SK-N-SH (cell line): ENCODE measurements at regions of chr14 and their contacts with region 1.

Region 1: DNA sequence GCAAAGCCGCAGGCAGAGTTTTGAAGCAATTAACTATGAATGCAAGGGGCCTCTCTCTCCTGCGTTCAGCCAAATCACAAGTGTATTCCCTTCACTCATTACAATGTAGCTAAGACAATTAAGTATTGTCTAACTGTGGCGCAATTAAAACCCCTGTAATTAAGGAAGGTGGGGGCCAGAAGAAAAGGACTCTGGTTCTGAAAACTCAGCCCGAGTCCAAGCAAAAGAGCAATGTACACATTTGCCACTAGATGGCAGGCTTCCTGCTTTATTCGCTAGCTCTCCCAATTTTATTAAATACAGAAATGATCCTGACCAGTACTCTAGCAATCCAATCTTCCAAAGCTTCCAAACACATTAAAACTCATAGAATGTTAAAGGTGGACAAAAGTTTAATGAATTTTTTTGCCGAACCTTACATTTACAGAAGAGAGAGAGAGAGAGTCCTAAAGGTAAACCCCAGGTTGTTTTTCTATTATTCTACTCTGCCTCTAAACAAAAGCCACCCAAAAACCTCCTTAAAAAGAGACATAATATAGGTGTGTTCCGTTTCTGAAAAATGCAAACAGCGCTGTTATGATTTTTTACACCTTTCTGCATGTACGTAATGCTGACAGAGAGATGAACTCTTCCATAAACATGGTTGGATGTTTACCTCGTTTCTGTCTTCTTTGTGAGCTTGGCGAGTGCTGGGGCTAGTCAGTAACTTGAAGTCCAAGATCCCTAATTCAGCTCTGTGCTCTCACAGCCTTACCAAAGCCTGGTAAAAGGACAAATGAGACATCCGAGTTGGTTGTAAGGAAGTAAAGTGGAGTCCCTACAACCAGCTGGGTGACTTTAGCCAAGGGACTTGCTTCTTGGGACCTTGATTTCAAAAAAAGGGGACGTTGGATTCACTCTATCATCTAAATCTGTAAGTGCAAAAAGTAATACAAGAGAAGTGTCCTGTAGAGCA is 50.9 kb upstream of the VASH1 start:
- DNase-seq: peak; percentile 68
- H3K4me3 ChIP-seq: no peak overlapping the region
- H3K27ac ChIP-seq: no peak overlapping the region
- H3K4me1 ChIP-seq: peaks cover 0 to 1% of the 10 kb centered on the region in 2 experiments; a peak in 1 of 4 replicates
- H3K27me3 ChIP-seq: no peaks in the 10 kb centered on the region; the same call in 1 of the 2 replicates
- CTCF ChIP-seq: peak; percentile 91
- EP300 ChIP-seq: no peak
- RAD21 ChIP-seq: peak; percentile 82

Region 2: DNA sequence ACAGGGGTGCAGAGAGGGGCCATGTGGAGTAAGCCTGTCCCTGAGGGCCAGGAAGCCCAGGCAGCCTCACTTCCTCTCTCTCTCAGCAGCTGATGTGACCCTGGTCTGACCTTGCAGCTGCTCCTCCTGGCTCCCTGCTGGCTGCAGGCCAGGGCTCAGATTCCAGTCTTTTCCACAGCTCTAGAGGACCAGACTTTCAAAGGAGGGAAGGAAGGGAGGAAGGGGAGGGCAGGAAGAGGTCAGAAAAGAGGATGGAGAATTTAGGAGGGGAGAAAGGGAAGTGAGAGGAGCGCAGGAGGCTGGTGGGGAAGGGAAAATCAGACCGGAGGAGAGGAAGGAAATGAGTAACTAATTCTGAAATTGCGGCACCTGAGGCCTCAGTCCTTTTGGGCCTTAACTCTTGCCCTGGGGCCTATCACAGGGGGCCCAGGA is 10.1 kb after region 1 on chr14:
- CTCF ChIA-PET with region 1: interaction called, 27 read pairs
- POLR2A ChIA-PET with region 1: no interaction called
- DNase-seq: peak; percentile 80
- H3K4me3 ChIP-seq: no peak overlapping the region
- H3K27ac ChIP-seq: peak overlapping the region in 1 of 2 experiments; percentile 83; a peak in 2 of 4 replicates
- H3K4me1 ChIP-seq: peaks cover 0 to 16% of the 10 kb centered on the region in 2 experiments; a peak in 2 of 4 replicates
- H3K27me3 ChIP-seq: peaks cover 9% of the 10 kb centered on the region; the same call in 1 of the 2 replicates
- CTCF ChIP-seq: no peak
- EP300 ChIP-seq: no peak
- RAD21 ChIP-seq: no peak

Region 3: DNA sequence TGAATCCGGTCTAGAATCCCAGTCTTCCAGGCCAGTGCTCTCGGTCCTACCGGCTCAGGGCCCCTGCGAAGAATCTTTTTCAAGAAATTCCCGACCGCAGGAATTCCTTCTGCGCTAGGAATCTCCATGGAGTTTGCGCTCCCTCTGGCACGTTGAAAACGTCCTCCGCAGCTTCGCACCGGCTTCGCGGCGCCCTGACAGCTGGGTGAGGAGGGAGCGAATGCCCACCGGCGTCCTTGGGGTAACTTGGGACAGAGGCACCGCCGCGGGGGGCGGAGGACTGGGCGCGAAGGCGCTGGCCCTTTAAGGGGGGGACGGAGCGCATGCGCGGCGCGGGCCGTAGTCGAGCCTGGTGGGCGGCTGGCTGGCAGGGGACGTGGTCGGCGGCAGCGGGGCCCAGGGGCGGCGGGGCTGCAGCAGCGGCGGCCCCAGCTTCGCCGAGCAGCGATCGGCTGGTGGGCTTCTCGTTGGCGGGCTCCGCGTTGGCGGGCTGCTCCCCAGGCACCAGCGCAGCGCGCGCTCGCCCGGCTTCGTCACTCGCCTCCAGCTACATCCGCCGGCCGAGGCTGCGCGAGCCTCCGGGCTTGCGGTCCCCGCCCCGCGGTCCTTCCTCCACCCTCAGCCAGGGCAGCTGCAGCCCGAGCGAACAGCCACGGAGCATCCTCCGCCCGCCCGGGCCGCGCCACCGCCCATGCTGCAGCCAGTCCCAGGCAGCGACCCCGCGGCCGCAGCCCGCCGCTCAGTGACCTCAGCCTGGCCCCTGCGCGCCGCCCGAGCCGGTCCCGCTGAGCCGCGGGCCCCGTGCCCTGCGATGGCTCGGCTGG is 51.0 kb after region 1 on chr14 and contains the start of gene VASH1:
- CTCF ChIA-PET with region 1: interaction called, 18 read pairs
- POLR2A ChIA-PET with region 1: no interaction called
- DNase-seq: peak; percentile 97
- H3K4me3 ChIP-seq: peak within 1 kb of the TSS; percentile 79 to 92
- H3K27ac ChIP-seq: peak within 1 kb of the TSS in 1 of 2 experiments; percentile 79; a peak in 2 of 4 replicates
- H3K4me1 ChIP-seq: peaks cover 0 to 25% of the 10 kb centered on the region in 2 experiments; a peak in 1 of 4 replicates
- H3K27me3 ChIP-seq: no peaks in the 10 kb centered on the region
- CTCF ChIP-seq: no peak
- EP300 ChIP-seq: no peak
- RAD21 ChIP-seq: no peak
- polyA plus RNA-seq, gene VASH1: 4.8 and 4.9 TPM in 2 replicates

Region 4: GRCh38 chr14:76773188-76773885 is 63.0 kb after region 1 on chr14:
- CTCF ChIA-PET with region 1: interaction called, 23 read pairs
- POLR2A ChIA-PET with region 1: no interaction called
- DNase-seq: peak; percentile 69
- H3K4me3 ChIP-seq: no peak overlapping the region
- H3K27ac ChIP-seq: peak overlapping the region; percentile 64 to 75
- H3K4me1 ChIP-seq: peaks cover 14 to 30% of the 10 kb centered on the region in 2 experiments
- H3K27me3 ChIP-seq: no peaks in the 10 kb centered on the region
- CTCF ChIP-seq: peak; percentile 16; the same call in 1 of the 2 replicates
- EP300 ChIP-seq: no peak; a peak in 1 of 4 replicates
- RAD21 ChIP-seq: no peak

Region 5: DNA sequence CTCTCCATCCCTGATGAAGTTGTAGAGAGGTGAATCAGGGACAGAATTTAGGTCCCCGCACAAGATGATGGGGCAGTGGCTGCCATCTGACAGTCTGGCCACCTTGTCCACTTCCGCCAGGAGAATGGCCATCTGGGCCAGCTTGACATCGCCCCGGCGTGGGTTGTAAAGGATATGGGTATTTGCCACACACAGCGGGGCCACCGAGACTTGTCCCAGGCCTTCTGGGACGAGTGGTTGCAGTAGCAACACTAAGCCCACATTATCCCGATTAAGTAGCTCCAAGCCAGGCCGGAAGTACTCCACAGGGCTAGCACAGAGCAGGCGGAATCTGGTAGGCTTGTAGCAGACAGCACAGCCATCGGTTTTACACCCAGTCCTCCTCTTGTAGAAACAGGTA is 96.1 kb after region 1 on chr14:
- CTCF ChIA-PET with region 1: interaction called, 112 read pairs
- POLR2A ChIA-PET with region 1: interaction called, 5 read pairs
- DNase-seq: no peak
- H3K4me3 ChIP-seq: no peak overlapping the region
- H3K27ac ChIP-seq: no peak overlapping the region
- H3K4me1 ChIP-seq: peaks cover 6 to 9% of the 10 kb centered on the region in 2 experiments; a peak in 3 of 4 replicates
- H3K27me3 ChIP-seq: no peaks in the 10 kb centered on the region
- CTCF ChIP-seq: no peak
- EP300 ChIP-seq: no peak
- RAD21 ChIP-seq: no peak

Region 6: GRCh38 chr14:77076113-77076631 is 365.8 kb after region 1 on chr14:
- CTCF ChIA-PET with region 1: interaction called, 17 read pairs
- POLR2A ChIA-PET with region 1: no interaction called
- DNase-seq: no peak
- H3K4me3 ChIP-seq: no peak overlapping the region
- H3K27ac ChIP-seq: no peak overlapping the region
- H3K4me1 ChIP-seq: no peaks in the 10 kb centered on the region
- H3K27me3 ChIP-seq: no peaks in the 10 kb centered on the region
- CTCF ChIP-seq: no peak
- EP300 ChIP-seq: no peak
- RAD21 ChIP-seq: no peak